IMR-90 (cell line): ENCODE measurements at regions of chr7 and their contacts with region 1.

Region 1: DNA sequence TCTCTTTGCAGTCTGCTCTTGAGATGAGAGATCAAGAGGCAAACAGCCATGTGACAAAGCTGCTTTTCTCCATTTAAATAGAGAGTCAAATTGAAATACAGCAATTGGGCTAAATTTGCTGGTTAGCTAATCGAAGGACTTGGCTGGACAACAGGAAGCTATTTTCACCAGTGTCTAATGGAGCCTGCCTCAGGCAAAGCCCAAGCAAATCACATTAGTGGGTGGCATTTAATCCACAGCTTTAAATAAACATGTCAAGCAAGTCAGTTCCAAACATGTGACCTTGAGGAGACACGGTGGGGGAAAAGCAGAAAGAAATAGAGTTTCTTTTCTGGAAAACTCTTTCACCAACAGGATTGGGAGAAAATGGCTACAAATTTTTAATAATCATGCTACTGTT is 180.5 kb upstream of the AOAH start:
- DNase-seq: no peak
- ATAC-seq: no peak
- H3K4me3 ChIP-seq: no peak overlapping the region
- H3K27ac ChIP-seq: no peak overlapping the region
- H3K4me1 ChIP-seq: no peaks in the 10 kb centered on the region
- H3K27me3 ChIP-seq: no peaks in the 10 kb centered on the region
- CTCF ChIP-seq: no peak
- POLR2A ChIP-seq: no peak
- RAD21 ChIP-seq: no peak

Region 2: DNA sequence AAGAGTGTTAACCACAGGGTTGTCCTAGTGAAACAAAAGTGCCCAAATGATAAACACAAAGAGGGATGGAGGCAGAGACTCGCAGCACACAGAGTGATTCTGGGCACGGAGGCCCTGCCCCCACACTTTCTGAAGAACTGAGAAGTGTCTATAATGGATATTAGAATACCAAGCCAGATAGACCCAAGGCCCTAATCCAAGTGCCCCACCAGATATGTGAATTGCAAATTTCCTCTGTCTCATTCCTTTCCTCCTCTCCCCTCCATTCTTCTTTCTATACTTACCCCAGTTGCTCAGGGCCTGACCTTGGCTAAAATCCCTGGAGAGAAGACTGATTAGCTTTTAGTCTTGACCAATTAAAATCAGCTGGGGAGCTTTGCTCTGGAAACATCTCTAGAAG is 73.8 kb before region 1 on chr7:
- CTCF ChIA-PET with region 1: no interaction called
- POLR2A ChIA-PET with region 1: no interaction called
- dilution Hi-C with region 1: no loop called
- in situ Hi-C with region 1: no loop called
- intact Hi-C with region 1: loop called (anchors 2 kb)
- DNase-seq: no peak
- ATAC-seq: no peak
- H3K4me3 ChIP-seq: no peak overlapping the region
- H3K27ac ChIP-seq: no peak overlapping the region
- H3K4me1 ChIP-seq: no peaks in the 10 kb centered on the region
- H3K27me3 ChIP-seq: no peaks in the 10 kb centered on the region
- CTCF ChIP-seq: no peak
- POLR2A ChIP-seq: no peak
- RAD21 ChIP-seq: no peak

Region 3: GRCh38 chr7:37074370-37074769 is 169.6 kb after region 1 on chr7:
- CTCF ChIA-PET with region 1: no interaction called
- POLR2A ChIA-PET with region 1: no interaction called
- dilution Hi-C with region 1: no loop called
- in situ Hi-C with region 1: no loop called
- intact Hi-C with region 1: no loop called
- DNase-seq: no peak
- ATAC-seq: no peak
- H3K4me3 ChIP-seq: no peak overlapping the region
- H3K27ac ChIP-seq: no peak overlapping the region
- H3K4me1 ChIP-seq: no peaks in the 10 kb centered on the region
- H3K27me3 ChIP-seq: no peaks in the 10 kb centered on the region; the same call in 1 of the 2 replicates
- CTCF ChIP-seq: no peak
- POLR2A ChIP-seq: no peak
- RAD21 ChIP-seq: no peak